ENCODE measurements at regions of chr9 and their contacts with region 1.

Region 1: DNA sequence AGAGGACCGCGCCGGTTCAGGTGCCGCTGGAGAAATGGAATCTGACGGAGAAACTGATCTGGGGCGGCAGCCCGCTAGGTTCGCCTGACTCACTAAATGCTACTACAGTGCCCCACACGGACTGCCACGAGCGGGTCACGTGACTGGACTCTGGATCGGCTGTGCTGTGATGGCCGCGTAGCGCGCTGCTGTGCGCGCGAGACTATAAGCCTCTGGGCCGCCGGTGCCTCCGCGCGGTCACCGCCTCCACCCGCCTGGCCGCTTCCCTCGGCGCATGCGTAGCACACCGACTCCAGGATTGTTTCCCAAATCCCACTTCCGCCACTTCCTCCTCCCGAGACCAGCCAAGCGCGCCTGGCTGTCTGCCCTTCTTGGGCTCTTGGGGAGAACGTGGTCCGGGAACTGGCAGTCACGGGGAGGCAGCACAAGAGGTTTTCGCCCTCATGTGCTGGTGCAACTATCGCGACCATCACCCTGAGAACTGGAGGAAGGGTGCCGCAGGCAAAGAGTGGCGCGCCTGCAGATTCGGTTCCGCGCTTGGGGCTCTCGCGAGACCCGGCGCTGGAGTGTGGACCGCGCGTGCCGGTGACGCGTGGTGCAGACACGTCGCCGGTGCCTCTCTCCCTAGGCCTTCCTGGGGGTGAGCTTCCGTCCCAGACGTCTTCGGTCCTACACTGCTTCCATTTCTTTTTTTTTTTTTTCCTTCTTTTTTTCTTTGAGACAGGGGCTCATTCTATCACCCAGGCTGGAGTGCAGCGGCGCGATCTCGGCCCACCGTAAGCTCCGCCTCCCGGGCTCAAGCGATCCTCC is 35.8 kb upstream of the GLDC start:
- DNase-seq: peak; percentile 82 to 95 (median 92)
- H3K4me3 ChIP-seq: peak overlapping the region; percentile 97
- H3K4me3 Mint-ChIP-seq: peak overlapping the region; percentile 90 to 98 (median 97)
- H3K27ac ChIP-seq: peak overlapping the region; percentile 93
- H3K27ac Mint-ChIP-seq: peak overlapping the region; percentile 98 to 100 (median 99)
- H3K4me1 ChIP-seq: peaks cover 20% of the 10 kb centered on the region
- H3K4me1 Mint-ChIP-seq: peaks cover 17 to 31% (median 23%) of the 10 kb centered on the region in 3 donors
- H3K27me3 ChIP-seq: no peaks in the 10 kb centered on the region
- H3K27me3 Mint-ChIP-seq: no peaks in the 10 kb centered on the region

Region 2: GRCh38 chr9:6412487-6413364 is 268.6 kb before region 1 on chr9 and contains the start of gene UHRF2:
- CTCF ChIA-PET with region 1: no interaction called
- POLR2A ChIA-PET with region 1: interaction called, 24 read pairs
- DNase-seq: peak; percentile 96 to 100 (median 98)
- H3K4me3 ChIP-seq: peak within 1 kb of the TSS; percentile 63
- H3K4me3 Mint-ChIP-seq: peak within 1 kb of the TSS; percentile 89 to 96 (median 92)
- H3K27ac ChIP-seq: peak within 1 kb of the TSS; percentile 79
- H3K27ac Mint-ChIP-seq: peak within 1 kb of the TSS; percentile 83 to 98 (median 92)
- H3K4me1 ChIP-seq: peaks cover 27% of the 10 kb centered on the region
- H3K4me1 Mint-ChIP-seq: peaks cover 34 to 38% (median 36%) of the 10 kb centered on the region in 3 donors
- H3K27me3 ChIP-seq: no peaks in the 10 kb centered on the region
- H3K27me3 Mint-ChIP-seq: no peaks in the 10 kb centered on the region
- total RNA-seq, gene UHRF2: 50.8 to 55.2 TPM

Region 3: DNA sequence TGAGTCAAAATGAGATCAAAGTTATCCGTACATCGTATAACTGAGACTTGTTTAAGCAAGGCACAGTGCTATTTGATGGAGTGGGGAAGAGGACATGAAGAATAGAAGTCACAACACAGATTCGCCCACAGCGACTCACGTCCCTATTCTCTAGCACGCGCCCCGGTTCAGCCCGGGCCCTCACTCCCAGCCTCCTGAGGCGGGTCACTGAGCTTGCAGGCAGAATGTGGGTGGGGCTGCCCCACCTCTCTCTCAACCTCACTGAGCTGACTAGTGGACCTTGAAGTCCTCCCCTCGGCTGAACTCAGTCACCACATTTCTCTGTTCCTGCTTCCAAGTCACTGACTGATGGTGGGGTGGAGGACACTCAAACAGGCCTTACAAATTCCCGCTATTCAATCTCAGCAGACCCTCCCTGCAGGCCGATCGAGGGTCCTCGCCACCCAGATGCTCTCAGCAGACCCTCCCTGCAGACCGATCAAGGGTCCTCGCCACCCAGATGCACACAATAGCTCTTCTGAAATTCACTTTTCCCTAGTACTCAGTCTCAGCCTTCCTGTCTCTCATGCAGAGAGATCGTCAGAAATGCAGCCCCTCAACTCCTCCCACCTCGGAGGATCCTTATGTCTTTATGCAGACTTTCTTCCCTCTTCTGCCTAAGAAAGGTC is 48.7 kb before region 1 on chr9:
- CTCF ChIA-PET with region 1: no interaction called
- POLR2A ChIA-PET with region 1: no interaction called
- DNase-seq: no peak
- H3K4me3 ChIP-seq: no peak overlapping the region
- H3K4me3 Mint-ChIP-seq: no peak overlapping the region
- H3K27ac ChIP-seq: no peak overlapping the region
- H3K27ac Mint-ChIP-seq: no peak overlapping the region
- H3K4me1 ChIP-seq: no peaks in the 10 kb centered on the region
- H3K4me1 Mint-ChIP-seq: peaks cover 0 to 4% (median 0%) of the 10 kb centered on the region in 3 donors
- H3K27me3 ChIP-seq: peaks cover 7% of the 10 kb centered on the region
- H3K27me3 Mint-ChIP-seq: peaks cover 9 to 16% of the 10 kb centered on the region in 2 donors

Region 4: DNA sequence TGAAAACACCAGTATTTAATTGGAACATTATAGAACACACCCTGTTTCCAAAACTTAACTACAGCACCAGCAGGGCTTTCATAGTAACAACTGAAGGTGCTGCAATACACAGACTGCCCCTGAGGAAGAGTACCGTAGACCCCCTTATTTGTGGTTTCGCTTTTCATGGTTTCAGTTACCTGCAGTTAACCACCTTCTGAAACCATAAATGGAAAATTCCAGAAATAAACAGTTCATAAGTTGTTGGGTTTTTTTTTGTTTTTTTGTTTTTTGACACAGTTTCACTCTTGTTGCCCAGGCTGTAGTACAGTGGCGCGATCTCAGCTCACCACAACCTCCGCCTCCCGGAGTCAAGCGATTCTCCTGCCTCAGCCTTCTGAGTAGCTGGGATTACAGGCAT is 26.3 kb before region 1 on chr9:
- CTCF ChIA-PET with region 1: no interaction called
- POLR2A ChIA-PET with region 1: no interaction called
- DNase-seq: peak in 1 of 5 donors; percentile 11
- H3K4me3 ChIP-seq: no peak overlapping the region
- H3K4me3 Mint-ChIP-seq: peak overlapping the region; percentile 27 to 85 (median 80)
- H3K27ac ChIP-seq: no peak overlapping the region
- H3K27ac Mint-ChIP-seq: peak overlapping the region in 5 of 8 donors; percentile 18 to 85 (median 56)
- H3K4me1 ChIP-seq: no peaks in the 10 kb centered on the region
- H3K4me1 Mint-ChIP-seq: peaks cover 7 to 12% (median 8%) of the 10 kb centered on the region in 3 donors
- H3K27me3 ChIP-seq: peaks cover 4% of the 10 kb centered on the region
- H3K27me3 Mint-ChIP-seq: peaks cover 15 to 30% of the 10 kb centered on the region in 2 donors

Region 5: DNA sequence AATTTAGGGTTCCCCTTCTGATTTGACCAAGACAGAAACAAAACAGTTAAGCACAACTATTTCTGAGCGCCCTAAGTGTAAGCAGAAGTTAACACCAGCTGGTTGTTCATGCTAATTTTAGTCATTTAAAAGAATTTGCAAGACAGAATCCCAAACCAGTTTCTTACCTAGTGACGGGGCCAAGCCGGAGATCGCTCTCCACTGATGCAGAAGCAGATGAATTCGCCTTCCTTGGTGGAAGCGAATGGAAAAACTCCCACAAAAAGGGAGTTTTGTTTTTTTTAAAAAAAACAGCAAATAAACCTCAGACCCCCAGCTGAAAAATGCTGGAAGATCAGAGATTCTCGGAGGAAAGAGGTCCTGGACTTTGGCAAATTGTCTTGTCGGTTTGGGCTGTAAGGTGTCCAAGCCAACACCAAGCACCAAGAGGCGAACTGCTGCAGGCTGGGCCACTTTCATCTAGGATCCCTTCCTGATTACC is 11.6 kb after region 1 on chr9:
- CTCF ChIA-PET with region 1: no interaction called
- POLR2A ChIA-PET with region 1: no interaction called
- DNase-seq: no peak
- H3K4me3 ChIP-seq: no peak overlapping the region
- H3K4me3 Mint-ChIP-seq: no peak overlapping the region
- H3K27ac ChIP-seq: no peak overlapping the region
- H3K27ac Mint-ChIP-seq: no peak overlapping the region
- H3K4me1 ChIP-seq: no peaks in the 10 kb centered on the region
- H3K4me1 Mint-ChIP-seq: no peaks in the 10 kb centered on the region
- H3K27me3 ChIP-seq: no peaks in the 10 kb centered on the region
- H3K27me3 Mint-ChIP-seq: no peaks in the 10 kb centered on the region

Region 6: DNA sequence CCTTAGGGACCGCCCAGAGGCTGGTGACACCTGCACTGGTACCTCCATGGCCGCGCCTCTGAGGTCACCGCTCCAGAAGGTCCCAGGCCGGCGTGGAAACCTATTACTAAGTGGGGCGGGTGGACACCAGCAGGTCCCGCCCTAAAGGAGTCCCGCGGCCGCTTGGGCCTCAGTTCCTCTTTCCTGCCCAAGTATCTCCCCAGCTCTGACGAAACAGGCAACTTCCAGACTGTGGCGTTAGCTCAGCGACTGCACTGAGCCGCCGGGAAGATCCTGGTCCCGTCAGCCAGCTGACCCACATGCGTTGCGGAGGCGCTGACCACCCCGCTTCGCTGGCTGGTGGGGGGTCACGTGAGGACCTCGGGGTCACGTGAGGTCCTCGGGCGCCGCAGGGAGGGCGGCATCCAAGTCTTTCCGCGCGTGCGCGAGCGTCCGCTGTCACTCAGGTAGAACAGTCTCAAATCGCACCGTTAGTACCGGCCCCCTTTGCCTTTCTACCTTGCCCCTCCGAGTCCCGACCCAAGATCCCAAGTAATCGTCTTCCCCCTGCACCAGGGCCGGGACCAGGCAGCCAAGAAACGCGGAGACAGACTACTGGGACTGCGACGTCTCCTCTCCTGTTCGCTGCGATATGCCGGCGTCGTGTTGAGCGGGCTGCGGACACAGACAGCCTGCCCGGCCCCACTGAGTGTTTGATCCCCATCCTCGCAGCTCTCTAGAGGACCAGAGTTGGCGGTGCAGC is 22.7 kb after region 1 on chr9:
- CTCF ChIA-PET with region 1: interaction called, 11 read pairs
- POLR2A ChIA-PET with region 1: interaction called, 33 read pairs
- DNase-seq: peak; percentile 74 to 92 (median 78)
- H3K4me3 ChIP-seq: peak overlapping the region; percentile 92
- H3K4me3 Mint-ChIP-seq: peak overlapping the region; percentile 83 to 97 (median 92)
- H3K27ac ChIP-seq: peak overlapping the region; percentile 93
- H3K27ac Mint-ChIP-seq: peak overlapping the region; percentile 92 to 97 (median 94)
- H3K4me1 ChIP-seq: peaks cover 5% of the 10 kb centered on the region
- H3K4me1 Mint-ChIP-seq: peaks cover 6 to 18% (median 7%) of the 10 kb centered on the region in 3 donors
- H3K27me3 ChIP-seq: no peaks in the 10 kb centered on the region
- H3K27me3 Mint-ChIP-seq: peaks cover 0 to 2% of the 10 kb centered on the region in 2 donors

Region 7: GRCh38 chr9:6715755-6716643 is 34.6 kb after region 1 on chr9:
- CTCF ChIA-PET with region 1: interaction called, 4 read pairs
- POLR2A ChIA-PET with region 1: interaction called, 13 read pairs
- DNase-seq: peak; percentile 27 to 80 (median 57)
- H3K4me3 ChIP-seq: peak overlapping the region; percentile 53
- H3K4me3 Mint-ChIP-seq: peak overlapping the region; percentile 85 to 91 (median 88)
- H3K27ac ChIP-seq: no peak overlapping the region
- H3K27ac Mint-ChIP-seq: peak overlapping the region; percentile 70 to 91 (median 86)
- H3K4me1 ChIP-seq: peaks cover 4% of the 10 kb centered on the region
- H3K4me1 Mint-ChIP-seq: peaks cover 4 to 13% (median 6%) of the 10 kb centered on the region in 3 donors
- H3K27me3 ChIP-seq: no peaks in the 10 kb centered on the region
- H3K27me3 Mint-ChIP-seq: peaks cover 0 to 2% of the 10 kb centered on the region in 2 donors

Region 8: GRCh38 chr9:6757456-6758247 is 76.3 kb after region 1 on chr9 and contains the start of gene KDM4C:
- CTCF ChIA-PET with region 1: interaction called, 4 read pairs
- POLR2A ChIA-PET with region 1: interaction called, 72 read pairs
- DNase-seq: peak; percentile 90 to 97 (median 93)
- H3K4me3 ChIP-seq: peak within 1 kb of the TSS; percentile 86
- H3K4me3 Mint-ChIP-seq: peak within 1 kb of the TSS; percentile 94 to 99 (median 97)
- H3K27ac ChIP-seq: peak within 1 kb of the TSS; percentile 97
- H3K27ac Mint-ChIP-seq: peak within 1 kb of the TSS; percentile 99 to 100 (median 100)
- H3K4me1 ChIP-seq: peaks cover 14% of the 10 kb centered on the region
- H3K4me1 Mint-ChIP-seq: peaks cover 28 to 44% (median 38%) of the 10 kb centered on the region in 3 donors
- H3K27me3 ChIP-seq: no peaks in the 10 kb centered on the region
- H3K27me3 Mint-ChIP-seq: peaks cover 0 to 7% of the 10 kb centered on the region in 2 donors
- total RNA-seq, gene KDM4C: 25.9 to 26.8 TPM